Mammary epithelial cell (primary cell): ENCODE measurements at regions of chr12 and their contacts with region 1.

Region 1: DNA sequence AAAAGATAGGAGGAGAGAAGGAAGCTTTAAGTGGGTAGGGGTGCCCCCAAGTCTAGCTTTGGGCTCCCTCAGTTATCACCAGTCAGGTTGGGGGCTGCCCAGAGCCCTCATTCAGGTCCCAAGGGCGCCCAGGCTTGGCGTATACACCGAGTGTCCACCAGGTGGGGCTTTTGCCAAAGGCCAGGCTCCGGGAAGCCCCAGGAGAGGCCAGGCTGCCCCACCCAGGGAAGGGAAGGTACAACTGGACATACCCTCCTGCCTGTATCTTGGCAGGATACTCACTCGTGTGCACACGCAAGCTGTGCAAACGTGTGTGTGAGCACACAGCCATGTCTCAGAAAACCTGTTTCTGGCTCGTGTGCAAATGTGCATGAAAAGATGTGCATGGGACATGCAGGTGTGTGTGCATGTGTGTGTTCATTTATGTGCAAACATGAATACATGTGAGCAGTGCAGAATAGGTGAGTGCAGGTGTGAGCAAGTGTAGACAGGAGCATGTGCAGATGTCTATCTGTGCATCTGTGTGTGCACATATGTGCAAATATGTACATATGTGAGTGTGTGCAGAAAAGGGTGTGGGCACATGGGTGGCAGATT is 103.9 kb upstream of the MYL2 start:
- DNase-seq: peak; percentile 43
- H3K4me3 ChIP-seq: no peak overlapping the region
- H3K27ac ChIP-seq: no peak overlapping the region
- H3K4me1 ChIP-seq: no peaks in the 10 kb centered on the region
- H3K27me3 ChIP-seq: peaks cover 7% of the 10 kb centered on the region
- CTCF ChIP-seq: peak; percentile 71 to 94

Region 2: GRCh38 chr12:110883251-110883650 is 141.1 kb before region 1 on chr12:
- CTCF ChIA-PET with region 1: no interaction called
- dilution Hi-C with region 1: loop called (anchors 5 kb)
- in situ Hi-C with region 1: no loop called
- intact Hi-C with region 1: no loop called
- DNase-seq: no peak
- H3K4me3 ChIP-seq: no peak overlapping the region
- H3K27ac ChIP-seq: no peak overlapping the region
- H3K4me1 ChIP-seq: no peaks in the 10 kb centered on the region
- H3K27me3 ChIP-seq: no peaks in the 10 kb centered on the region
- CTCF ChIP-seq: no peak

Region 3: DNA sequence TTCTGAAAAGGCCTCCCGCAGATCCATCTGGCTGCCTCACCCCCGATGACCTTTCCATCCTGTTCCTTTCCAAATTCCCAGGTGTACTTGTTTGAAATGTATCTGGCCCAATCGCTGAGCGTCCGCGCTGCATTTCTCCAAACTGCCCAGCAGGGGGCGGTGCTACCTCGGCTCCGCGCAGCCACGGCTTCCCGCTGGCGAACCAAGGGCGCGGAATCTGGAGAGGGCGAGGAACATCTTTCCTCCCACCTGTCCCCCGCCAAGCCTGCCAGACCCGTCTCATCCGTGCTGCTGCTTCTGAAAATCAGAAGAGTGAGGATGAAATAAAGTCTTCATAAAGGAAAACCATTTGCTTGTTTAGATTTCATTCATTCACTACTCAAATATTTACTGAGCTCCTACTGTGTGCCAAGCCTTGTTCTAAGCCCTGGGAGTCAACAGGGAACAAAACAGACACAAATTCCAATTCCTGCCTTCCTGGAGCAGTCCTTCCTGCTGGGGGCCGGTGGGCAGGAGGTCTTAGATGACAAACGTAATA is 87.1 kb before region 1 on chr12:
- CTCF ChIA-PET with region 1: no interaction called
- dilution Hi-C with region 1: no loop called
- in situ Hi-C with region 1: no loop called
- intact Hi-C with region 1: loop called (anchors 2 kb)
- DNase-seq: peak; percentile 33
- H3K4me3 ChIP-seq: no peak overlapping the region
- H3K27ac ChIP-seq: no peak overlapping the region
- H3K4me1 ChIP-seq: peaks cover 20% of the 10 kb centered on the region
- H3K27me3 ChIP-seq: no peaks in the 10 kb centered on the region
- CTCF ChIP-seq: peak; percentile 94 to 96

Region 4: DNA sequence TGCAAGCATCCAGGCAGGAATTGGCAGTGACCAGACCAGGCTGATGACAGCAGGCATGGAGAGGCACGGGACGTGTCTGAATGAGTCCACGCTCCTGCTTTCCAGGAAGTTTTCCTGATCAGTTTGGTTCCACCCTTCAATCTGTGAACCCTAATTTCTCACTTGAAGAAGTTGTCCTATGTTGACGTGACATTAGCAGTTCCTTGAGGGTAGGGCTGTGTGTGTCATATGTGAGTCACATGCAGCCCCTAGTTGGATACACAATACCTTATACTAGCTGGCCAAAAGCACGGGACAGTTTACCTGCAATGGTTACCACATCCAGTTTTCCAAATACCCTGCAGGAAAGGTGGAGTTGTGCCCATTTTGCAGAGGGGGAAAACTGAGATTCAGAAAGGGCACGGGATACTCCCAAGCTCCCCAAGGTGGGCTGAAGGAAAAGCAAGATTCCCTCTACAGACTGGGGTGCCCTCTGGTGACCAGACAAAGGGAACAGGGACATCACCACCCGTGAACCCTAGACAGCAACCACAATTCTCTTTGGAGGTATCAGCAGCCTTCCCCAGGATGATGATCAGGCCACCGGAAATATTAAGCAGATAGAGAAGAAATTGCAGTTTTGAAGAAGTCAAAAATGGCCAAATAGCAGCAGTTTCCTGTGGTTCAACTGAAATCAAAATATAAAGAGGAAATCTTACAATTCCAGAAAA is 150.1 kb after region 1 on chr12:
- CTCF ChIA-PET with region 1: no interaction called
- dilution Hi-C with region 1: no loop called
- in situ Hi-C with region 1: no loop called
- intact Hi-C with region 1: loop called (anchors 1 kb)
- DNase-seq: no peak
- H3K4me3 ChIP-seq: no peak overlapping the region
- H3K27ac ChIP-seq: no peak overlapping the region
- H3K4me1 ChIP-seq: no peaks in the 10 kb centered on the region
- H3K27me3 ChIP-seq: no peaks in the 10 kb centered on the region
- CTCF ChIP-seq: peak; percentile 4 to 55

Region 5: GRCh38 chr12:111313833-111314259 is 289.5 kb after region 1 on chr12:
- CTCF ChIA-PET with region 1: no interaction called
- dilution Hi-C with region 1: no loop called
- in situ Hi-C with region 1: loop called in 1 of 2 experiments (anchors 10 kb)
- intact Hi-C with region 1: loop called (anchors 1 kb)
- DNase-seq: peak; percentile 36
- H3K4me3 ChIP-seq: no peak overlapping the region
- H3K27ac ChIP-seq: no peak overlapping the region
- H3K4me1 ChIP-seq: no peaks in the 10 kb centered on the region
- H3K27me3 ChIP-seq: peaks cover 1% of the 10 kb centered on the region
- CTCF ChIP-seq: peak; percentile 85 to 97